ENCODE measurements at regions of chr4 and their contacts with region 1.

Region 1: DNA sequence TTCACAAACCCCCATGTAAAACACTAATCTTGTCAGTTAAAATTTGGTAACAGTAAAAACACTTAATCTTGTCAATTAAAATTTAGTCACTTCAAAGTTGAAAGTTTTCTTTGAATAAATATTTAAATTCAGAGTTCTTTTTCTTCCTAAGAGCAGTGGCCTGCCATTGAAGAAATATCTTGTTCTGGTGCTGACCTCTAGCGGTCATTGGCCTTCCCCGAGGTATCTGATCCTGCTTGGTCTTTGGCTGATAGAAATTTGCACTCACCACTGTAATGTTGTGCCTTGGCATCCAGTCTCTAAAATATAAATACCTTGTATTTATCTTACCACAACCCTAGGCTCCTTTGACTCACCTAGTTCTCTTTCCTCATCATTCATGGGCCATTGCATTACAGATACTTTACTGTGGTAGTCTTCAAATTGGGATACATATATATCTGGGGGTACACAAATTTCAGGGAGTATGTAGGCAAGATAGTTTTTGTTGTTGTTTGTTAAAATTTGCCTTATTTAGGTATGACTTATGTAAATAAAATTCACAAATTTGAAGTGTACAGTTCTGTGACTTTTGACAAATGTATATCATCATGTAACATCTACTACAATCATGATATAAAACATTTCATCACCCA is 6.7 kb upstream of the ART3 start:
- DNase-seq: peak; percentile 72
- H3K4me3 ChIP-seq: no peak overlapping the region
- H3K27ac ChIP-seq: no peak overlapping the region
- H3K4me1 ChIP-seq: no peaks in the 10 kb centered on the region
- CTCF ChIP-seq: peak; percentile 96

Region 2: GRCh38 chr4:75895744-75896314 is 171.9 kb before region 1 on chr4:
- CTCF ChIA-PET with region 1: no interaction called
- POLR2A ChIA-PET with region 1: no interaction called
- intact Hi-C with region 1: loop called (anchors 1 kb)
- DNase-seq: peak; percentile 51
- H3K4me3 ChIP-seq: no peak overlapping the region
- H3K27ac ChIP-seq: no peak overlapping the region
- H3K4me1 ChIP-seq: no peaks in the 10 kb centered on the region
- CTCF ChIP-seq: peak; percentile 84

Region 3: DNA sequence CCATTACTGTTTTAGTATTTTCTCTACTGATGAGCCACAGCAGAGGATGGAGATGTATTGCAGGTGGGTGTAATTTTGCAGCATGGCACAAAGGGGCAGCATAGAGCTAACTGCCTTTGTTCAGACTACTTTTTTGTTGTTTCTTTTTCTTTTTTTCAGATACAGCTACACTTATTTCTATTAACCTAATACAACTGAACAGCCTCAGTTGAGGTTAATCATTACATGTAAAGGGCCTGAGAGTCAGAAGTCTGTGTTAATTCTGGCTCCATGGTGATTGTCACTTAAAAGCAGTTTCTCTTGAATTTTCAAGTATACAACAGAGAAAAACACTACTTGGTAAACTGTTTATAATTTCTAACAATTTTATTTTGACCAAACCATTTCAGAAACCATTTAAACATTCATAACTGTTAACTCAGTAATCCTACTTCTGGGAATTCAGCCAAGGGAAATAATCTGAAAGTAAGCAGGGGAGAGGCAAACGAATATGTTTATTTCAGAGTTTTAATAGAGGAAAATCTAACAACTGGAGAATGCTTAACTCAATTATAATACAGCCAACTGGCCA is 151.6 kb before region 1 on chr4:
- CTCF ChIA-PET with region 1: interaction called, 4 read pairs
- POLR2A ChIA-PET with region 1: no interaction called
- intact Hi-C with region 1: loop called (anchors 2 kb)
- DNase-seq: peak; percentile 50
- H3K4me3 ChIP-seq: no peak overlapping the region
- H3K27ac ChIP-seq: no peak overlapping the region
- H3K4me1 ChIP-seq: no peaks in the 10 kb centered on the region
- CTCF ChIP-seq: peak; percentile 96

Region 4: DNA sequence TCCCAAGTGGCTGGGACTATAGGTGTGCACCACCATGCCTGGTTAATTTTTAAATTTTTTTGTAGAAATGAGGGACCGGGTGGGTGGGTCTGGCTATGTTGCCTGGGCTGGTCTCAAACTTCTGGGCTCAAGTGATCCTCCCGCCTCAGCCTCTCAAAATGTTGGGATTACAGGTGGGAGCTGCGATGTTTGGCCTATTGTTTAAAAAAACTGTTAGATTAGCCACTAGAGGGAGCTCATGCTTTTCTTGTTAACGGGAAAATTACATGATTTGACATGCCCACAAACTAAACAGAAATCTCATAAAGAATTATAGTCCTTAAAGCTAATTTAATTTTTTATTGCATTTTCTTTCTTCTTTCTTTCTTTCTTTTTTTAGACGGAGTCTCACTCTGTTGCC is 72.0 kb before region 1 on chr4:
- CTCF ChIA-PET with region 1: no interaction called
- POLR2A ChIA-PET with region 1: interaction called, 5 read pairs
- intact Hi-C with region 1: loop called (anchors 1 kb)
- DNase-seq: peak; percentile 68
- H3K4me3 ChIP-seq: no peak overlapping the region
- H3K27ac ChIP-seq: no peak overlapping the region
- H3K4me1 ChIP-seq: no peaks in the 10 kb centered on the region
- CTCF ChIP-seq: peak; percentile 75

Region 5: GRCh38 chr4:76772498-76773106 is 704.8 kb after region 1 on chr4:
- CTCF ChIA-PET with region 1: no interaction called
- POLR2A ChIA-PET with region 1: no interaction called
- intact Hi-C with region 1: no loop called
- DNase-seq: no peak
- H3K4me3 ChIP-seq: no peak overlapping the region
- H3K27ac ChIP-seq: no peak overlapping the region
- H3K4me1 ChIP-seq: no peaks in the 10 kb centered on the region
- CTCF ChIP-seq: no peak